ENCODE measurements at regions of chr17 and their contacts with region 1.

Region 1: DNA sequence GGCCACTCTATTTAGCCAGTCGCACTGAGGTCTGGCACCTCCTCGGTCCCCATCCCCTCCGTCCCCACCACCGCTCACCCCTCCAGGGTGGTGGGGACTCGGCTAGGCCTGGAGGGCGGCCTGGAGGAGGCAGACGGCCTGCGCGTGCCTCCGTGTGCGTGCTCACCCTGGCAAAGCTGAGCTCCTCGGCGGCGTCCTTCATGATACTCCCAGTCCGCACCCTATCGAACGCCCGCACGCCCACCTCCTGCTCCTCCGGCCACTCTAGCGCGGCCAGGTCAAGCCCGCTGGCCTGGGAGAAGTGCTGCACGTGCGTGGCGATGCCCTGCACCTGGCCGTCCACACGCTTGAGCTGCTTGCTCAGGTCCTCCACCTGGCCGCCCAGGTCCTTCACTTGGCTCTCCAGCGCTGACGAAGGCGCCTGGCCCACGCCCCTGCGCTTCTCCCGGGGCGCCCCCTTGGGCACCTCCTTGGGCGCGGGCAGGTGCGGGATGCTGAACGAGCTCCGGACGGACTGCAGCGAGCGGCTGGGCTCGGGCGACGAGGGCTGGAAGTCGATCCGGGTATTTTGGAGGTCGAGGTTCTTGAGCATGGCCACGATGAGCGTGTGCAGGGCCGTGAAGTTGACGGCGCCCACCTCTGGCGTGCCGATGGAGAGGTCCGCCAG is 644 bp downstream of the QRICH2 start:
- DNase-seq: no peak
- ATAC-seq: peak in 1 of 4 donors; percentile 34
- H3K4me3 ChIP-seq: no peak overlapping the region
- H3K27ac ChIP-seq: no peak overlapping the region
- H3K4me1 ChIP-seq: no peaks in the 10 kb centered on the region
- H3K27me3 ChIP-seq: no peaks in the 10 kb centered on the region
- CTCF ChIP-seq: no peak

Region 2: GRCh38 chr17:76014184-76014924 is 293.1 kb before region 1 on chr17:
- intact Hi-C with region 1: loop called in 1 of 2 experiments (anchors 5 kb)
- DNase-seq: peak; percentile 73 to 82
- ATAC-seq: peak; percentile 83 to 96 (median 90)
- H3K4me3 ChIP-seq: no peak overlapping the region
- H3K27ac ChIP-seq: no peak overlapping the region
- H3K4me1 ChIP-seq: peaks cover 3% of the 10 kb centered on the region
- H3K27me3 ChIP-seq: peaks cover 0 to 1% (median 0%) of the 10 kb centered on the region in 3 donors
- CTCF ChIP-seq: peak; percentile 97

Region 3: DNA sequence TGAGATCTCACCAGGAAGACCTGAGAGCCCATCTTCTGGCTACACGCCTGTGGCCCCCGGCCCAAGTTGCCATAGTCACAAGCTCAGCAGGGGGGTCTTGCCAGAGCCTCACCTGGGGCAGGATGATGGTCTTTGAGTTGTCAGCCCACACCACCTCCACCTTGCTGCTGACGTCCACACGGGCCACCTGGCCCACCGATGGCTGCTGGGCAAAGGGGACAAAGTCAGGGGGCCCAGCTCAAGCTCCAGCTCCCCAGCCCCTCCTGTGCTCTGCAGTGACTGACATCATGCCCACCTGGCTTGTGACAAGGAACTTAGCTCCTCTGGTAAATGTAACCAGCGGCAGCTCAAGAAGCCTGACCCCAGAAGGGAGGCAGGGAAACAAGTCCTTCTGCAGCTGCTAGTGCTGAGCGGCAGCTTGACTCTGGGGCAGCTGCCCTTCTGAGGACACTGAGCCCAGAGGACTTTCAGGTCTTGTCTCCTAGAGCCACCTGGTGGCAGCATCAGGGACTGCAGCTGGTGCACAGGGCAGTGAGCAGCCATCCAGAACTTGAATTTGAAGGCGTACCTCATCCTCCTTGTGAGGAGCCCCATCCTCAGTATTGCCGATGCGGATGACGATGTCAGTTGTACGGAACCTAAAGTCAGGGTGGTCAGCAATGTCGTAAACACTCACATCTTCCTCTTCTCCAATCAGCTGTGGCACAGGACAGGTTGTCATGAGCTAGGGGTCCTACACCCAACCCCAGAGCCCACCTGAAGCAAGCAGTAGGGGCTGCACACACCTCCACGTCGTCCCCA is 90.5 kb after region 1 on chr17:
- intact Hi-C with region 1: loop called (anchors 1 to 5 kb)
- DNase-seq: peak; percentile 90 to 95
- ATAC-seq: peak; percentile 87 to 96 (median 90)
- H3K4me3 ChIP-seq: no peak overlapping the region
- H3K27ac ChIP-seq: peak overlapping the region; percentile 65
- H3K4me1 ChIP-seq: peaks cover 3% of the 10 kb centered on the region
- H3K27me3 ChIP-seq: no peaks in the 10 kb centered on the region
- CTCF ChIP-seq: peak; percentile 98

Region 4: GRCh38 chr17:76501018-76501826 is 193.8 kb after region 1 on chr17 and contains the start of gene RHBDF2:
- intact Hi-C with region 1: loop called (anchors 5 to 10 kb)
- DNase-seq: peak; percentile 86 to 93
- ATAC-seq: peak; percentile 84 to 88 (median 85)
- H3K4me3 ChIP-seq: peak within 1 kb of the TSS; percentile 85
- H3K27ac ChIP-seq: peak within 1 kb of the TSS; percentile 94
- H3K4me1 ChIP-seq: peaks cover 39% of the 10 kb centered on the region
- H3K27me3 ChIP-seq: no peaks in the 10 kb centered on the region
- CTCF ChIP-seq: no peak
- total RNA-seq, gene RHBDF2: 6.6 to 23.1 (median 12.4) TPM

Region 5: DNA sequence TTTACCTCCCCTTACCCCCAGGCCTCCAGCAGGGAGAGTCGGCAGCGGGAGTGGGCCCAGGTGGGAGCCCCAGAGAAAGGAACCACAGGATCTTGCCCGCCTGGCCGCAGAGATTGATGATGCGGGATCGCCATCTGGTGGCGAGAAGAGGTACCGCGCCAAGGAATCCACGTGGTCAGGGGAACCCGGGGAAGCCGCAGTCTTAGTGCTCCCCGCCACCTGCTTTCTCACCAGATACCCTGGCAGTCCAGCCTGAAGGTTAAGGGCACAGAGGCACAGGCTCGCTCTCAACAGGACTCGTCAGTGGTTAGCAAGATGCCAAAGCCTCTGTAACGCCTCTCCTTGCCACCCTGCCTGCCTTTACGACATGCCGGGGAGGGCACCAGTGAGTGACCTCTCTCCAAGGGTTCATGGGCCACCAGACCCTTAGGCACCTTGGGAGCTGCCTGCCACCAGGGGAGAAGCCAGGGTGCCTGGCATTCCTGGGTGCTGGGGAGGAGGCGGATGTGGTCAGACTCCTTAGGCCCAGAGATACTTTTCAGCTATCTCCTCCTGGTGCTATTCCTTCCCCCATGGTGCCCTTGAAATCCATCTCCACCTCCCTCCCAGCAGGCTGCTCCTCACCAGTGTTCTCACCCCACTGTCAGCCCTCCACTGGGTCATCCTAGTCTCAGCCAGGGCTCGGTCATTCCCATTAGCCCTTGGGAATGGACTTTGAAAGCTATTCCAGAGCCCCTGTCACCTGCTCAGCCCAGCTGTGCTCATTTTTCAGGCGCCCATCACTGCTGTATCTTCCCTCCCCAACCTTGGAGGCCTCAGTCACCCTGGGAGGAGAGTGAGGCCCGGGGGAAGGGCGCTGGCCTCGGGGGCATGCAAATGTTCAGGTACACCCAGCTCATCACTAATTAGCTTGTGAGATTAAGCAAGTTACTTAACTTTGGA is 199.2 kb after region 1 on chr17:
- intact Hi-C with region 1: loop called (anchors 5 to 10 kb)
- DNase-seq: peak; percentile 85 to 92
- ATAC-seq: peak; percentile 82 to 89 (median 85)
- H3K4me3 ChIP-seq: no peak overlapping the region
- H3K27ac ChIP-seq: peak overlapping the region; percentile 32
- H3K4me1 ChIP-seq: peaks cover 4% of the 10 kb centered on the region
- H3K27me3 ChIP-seq: no peaks in the 10 kb centered on the region
- CTCF ChIP-seq: peak; percentile 96